Breast epithelium (tissue), 4 donors: ENCODE measurements at regions of chr2 and their contacts with region 1.

Region 1: DNA sequence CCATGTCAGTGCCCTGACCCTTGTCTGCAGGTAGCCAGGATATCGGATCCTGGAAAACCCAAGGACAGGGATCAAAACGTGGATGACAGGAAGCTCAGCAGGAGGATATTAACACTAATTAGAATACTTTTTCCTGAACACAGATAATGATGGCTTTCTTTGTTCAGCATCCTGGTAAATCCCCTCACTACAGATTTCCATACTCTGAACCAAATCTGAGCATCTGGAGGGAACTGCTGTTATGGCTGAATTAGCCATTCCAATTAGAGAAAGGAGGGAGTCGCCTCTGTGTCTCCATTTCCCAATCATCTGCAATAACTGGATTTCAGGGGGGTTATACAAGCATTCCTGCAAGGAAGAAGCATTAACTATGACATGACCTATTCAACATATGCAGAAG is 24.4 kb downstream of the CXCR4 start:
- DNase-seq: no peak
- H3K4me3 ChIP-seq: no peak overlapping the region
- H3K27ac ChIP-seq: no peak overlapping the region
- H3K4me1 ChIP-seq: no peaks in the 10 kb centered on the region
- H3K27me3 ChIP-seq: no peaks in the 10 kb centered on the region
- CTCF ChIP-seq: no peak
- POLR2A ChIP-seq: no peak

Region 2: DNA sequence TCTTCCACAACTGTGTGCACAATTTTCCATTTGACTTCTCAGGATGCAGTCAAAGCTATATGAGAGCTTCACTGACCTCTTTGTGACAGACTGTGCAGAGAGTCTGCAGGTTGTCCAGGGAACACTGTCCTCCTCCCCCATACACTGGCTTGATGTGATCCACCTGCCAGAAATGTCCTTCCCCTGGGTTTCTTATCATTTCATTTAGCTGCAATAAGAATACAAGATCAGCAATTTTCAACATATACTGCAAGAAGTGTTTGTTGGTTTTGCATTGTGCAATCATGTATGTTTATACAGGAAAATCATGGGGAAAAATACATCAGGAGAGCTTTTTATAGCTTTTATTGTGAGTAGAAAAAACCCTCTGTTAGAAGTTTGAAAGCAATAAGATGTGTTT is 890.8 kb before region 1 on chr2:
- intact Hi-C with region 1: no loop called
- DNase-seq: no peak
- H3K4me3 ChIP-seq: no peak overlapping the region
- H3K27ac ChIP-seq: no peak overlapping the region
- H3K4me1 ChIP-seq: no peaks in the 10 kb centered on the region
- H3K27me3 ChIP-seq: no peaks in the 10 kb centered on the region
- CTCF ChIP-seq: no peak
- POLR2A ChIP-seq: no peak

Region 3: DNA sequence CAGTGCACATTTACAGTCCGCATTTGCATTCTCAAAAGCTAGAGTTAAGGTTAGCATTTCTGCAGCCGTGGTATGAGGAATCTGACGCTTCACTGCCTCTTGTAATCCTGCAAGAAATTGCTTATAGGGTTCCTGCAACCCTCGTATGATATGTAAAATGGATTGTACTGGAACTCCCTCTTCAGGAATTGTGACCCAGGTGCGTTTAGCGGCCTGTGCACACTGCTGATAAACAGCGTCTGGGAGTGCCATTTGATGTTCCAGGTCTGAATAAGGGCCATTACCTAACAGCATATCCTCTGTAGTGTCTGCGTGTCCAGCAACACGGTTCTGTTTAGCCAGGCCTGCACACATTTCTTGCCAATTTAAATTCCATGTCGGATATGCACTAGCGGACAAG is 18.1 kb before region 1 on chr2:
- intact Hi-C with region 1: loop called (anchors 2 kb)
- DNase-seq: no peak
- H3K4me3 ChIP-seq: no peak overlapping the region
- H3K27ac ChIP-seq: no peak overlapping the region
- H3K4me1 ChIP-seq: no peaks in the 10 kb centered on the region
- H3K27me3 ChIP-seq: no peaks in the 10 kb centered on the region
- CTCF ChIP-seq: no peak
- POLR2A ChIP-seq: no peak

Region 4: GRCh38 chr2:136107051-136108033 is 13.8 kb after region 1 on chr2:
- intact Hi-C with region 1: no loop called
- DNase-seq: no peak
- H3K4me3 ChIP-seq: no peak overlapping the region
- H3K27ac ChIP-seq: no peak overlapping the region
- H3K4me1 ChIP-seq: no peaks in the 10 kb centered on the region
- H3K27me3 ChIP-seq: no peaks in the 10 kb centered on the region
- CTCF ChIP-seq: no peak
- POLR2A ChIP-seq: no peak

Region 5: GRCh38 chr2:136327162-136327852 is 233.7 kb after region 1 on chr2:
- intact Hi-C with region 1: no loop called
- DNase-seq: no peak
- H3K4me3 ChIP-seq: peak overlapping the region in 1 of 3 donors; percentile 43
- H3K27ac ChIP-seq: peak overlapping the region in 1 of 2 donors; percentile 48
- H3K4me1 ChIP-seq: no peaks in the 10 kb centered on the region
- H3K27me3 ChIP-seq: no peaks in the 10 kb centered on the region
- CTCF ChIP-seq: no peak
- POLR2A ChIP-seq: no peak